ENCODE measurements at regions of chr20 and their contacts with region 1.

Region 1: GRCh38 chr20:6410721-6411120 is 287.9 kb upstream of the FERMT1 start:
- DNase-seq: no peak
- H3K4me3 ChIP-seq: no peak overlapping the region
- CTCF ChIP-seq: no peak

Region 2: DNA sequence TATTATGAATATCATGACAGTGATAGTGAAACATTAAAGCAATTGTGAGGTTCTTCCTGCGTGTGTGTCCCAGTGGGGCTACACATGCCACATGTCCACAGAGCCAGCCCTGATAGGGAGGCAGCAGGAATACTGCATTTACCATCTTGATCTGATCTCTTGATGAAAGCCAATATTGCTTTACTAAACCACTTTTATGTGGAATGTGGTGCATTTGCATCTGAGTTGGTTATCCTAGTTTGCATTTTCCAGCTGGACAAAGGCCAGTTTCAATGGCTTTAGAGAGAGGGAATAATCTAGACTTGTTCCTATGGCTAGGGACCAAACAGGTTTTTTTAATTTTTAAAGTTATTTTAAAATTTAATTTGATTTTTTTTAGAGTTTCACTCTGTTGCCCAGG is 71.5 kb before region 1 on chr20:
- in situ Hi-C with region 1: loop called (anchors 5 kb)
- DNase-seq: no peak
- H3K4me3 ChIP-seq: no peak overlapping the region
- CTCF ChIP-seq: no peak

Region 3: DNA sequence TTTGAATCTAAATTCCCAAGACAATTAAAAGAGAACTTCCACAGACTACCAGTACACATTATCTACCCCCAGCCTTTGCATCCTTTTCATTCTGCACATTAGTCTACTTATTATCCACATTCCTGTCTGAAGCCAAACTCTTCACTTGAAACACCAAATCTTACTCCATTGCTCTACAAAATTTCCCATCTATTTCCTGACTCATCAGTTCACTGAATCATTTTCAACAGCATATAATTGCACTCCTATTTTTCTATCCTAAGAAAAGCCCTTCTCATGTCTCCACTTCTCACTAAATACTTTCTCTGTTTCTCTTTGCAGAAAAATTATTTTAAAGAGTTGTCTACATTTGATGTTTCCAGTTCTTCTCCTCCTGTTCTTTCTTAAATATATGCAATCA is 48.5 kb before region 1 on chr20:
- in situ Hi-C with region 1: no loop called
- DNase-seq: no peak
- H3K4me3 ChIP-seq: no peak overlapping the region
- CTCF ChIP-seq: no peak

Measured in astrocyte of the cerebellum (primary cell).